Dendritic cell treated with granulocyte-macrophage colony-stimulating factor and Interleukin-4, amounts not matched to agents 40 ng/mL and 50 ng/mL, for 4 days (primary cell): ENCODE measurements at regions of chr19 and their contacts with region 1.

Region 1: DNA sequence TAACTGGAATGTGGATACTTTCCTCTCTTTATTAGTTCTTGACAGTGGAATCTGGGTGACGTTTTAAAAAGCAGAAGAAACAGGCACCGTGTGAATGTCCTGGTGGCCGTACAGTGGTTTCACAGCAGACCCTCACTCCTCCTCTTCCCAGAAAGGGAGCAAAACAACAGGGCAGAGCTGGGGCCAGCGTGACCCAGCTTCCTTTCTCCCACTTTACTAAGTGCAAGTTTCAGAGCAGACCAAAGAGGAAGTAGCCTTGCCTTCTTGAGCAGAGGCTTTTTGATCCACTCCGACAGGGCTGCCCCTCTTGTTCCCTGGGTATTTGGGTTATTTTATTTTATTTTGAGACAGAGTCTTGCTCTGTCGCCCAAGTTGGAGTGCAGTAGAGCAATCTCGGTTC is 19.6 kb upstream of the C19orf33 start:
- H3K4me3 Mint-ChIP-seq: peak overlapping the region; percentile 51
- H3K27ac Mint-ChIP-seq: peak overlapping the region; percentile 89
- H3K4me1 Mint-ChIP-seq: peaks cover 89% of the 10 kb centered on the region
- H3K27me3 Mint-ChIP-seq: no peaks in the 10 kb centered on the region

Region 2: GRCh38 chr19:38216785-38217641 is 67.4 kb before region 1 on chr19:
- intact Hi-C with region 1: no loop called
- H3K4me3 Mint-ChIP-seq: no peak overlapping the region
- H3K27ac Mint-ChIP-seq: no peak overlapping the region
- H3K4me1 Mint-ChIP-seq: peaks cover 8% of the 10 kb centered on the region
- H3K27me3 Mint-ChIP-seq: peaks cover 61% of the 10 kb centered on the region

Region 3: DNA sequence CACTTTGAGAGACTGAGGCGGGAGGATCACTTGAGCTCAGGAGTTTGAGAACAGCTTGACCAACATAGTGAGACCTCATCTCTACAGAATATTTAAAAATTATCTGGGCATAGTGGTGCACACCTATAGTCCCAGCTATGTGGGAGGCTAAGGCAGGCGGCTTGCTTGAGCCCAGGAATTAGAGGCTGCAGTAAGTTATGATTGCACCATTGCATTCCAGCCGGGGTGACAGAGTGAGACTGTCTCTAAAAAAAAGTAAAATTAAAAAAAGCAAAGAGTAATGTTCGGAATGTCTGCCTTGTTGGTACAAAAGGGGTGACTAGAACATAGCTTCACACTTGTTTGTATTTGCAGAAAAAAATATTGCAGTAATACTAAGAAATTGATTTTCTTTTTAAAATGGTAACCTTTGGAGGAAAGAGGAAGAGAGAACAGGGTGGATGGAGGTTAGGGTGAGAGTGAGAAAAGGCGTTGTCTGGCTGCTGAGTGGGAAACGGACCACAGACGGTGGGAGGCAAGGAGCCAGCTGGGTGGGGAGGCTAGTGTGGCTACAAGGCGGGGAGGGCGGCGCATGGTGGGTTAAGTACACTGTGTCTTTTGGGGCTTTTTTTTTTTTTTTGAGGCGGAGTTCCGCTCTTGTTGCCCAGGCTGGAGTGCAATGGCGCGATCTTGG is 38.5 kb before region 1 on chr19:
- intact Hi-C with region 1: loop called (anchors 5 kb)
- H3K4me3 Mint-ChIP-seq: peak overlapping the region; percentile 30
- H3K27ac Mint-ChIP-seq: peak overlapping the region; percentile 87
- H3K4me1 Mint-ChIP-seq: peaks cover 48% of the 10 kb centered on the region
- H3K27me3 Mint-ChIP-seq: peaks cover 7% of the 10 kb centered on the region

Region 4: DNA sequence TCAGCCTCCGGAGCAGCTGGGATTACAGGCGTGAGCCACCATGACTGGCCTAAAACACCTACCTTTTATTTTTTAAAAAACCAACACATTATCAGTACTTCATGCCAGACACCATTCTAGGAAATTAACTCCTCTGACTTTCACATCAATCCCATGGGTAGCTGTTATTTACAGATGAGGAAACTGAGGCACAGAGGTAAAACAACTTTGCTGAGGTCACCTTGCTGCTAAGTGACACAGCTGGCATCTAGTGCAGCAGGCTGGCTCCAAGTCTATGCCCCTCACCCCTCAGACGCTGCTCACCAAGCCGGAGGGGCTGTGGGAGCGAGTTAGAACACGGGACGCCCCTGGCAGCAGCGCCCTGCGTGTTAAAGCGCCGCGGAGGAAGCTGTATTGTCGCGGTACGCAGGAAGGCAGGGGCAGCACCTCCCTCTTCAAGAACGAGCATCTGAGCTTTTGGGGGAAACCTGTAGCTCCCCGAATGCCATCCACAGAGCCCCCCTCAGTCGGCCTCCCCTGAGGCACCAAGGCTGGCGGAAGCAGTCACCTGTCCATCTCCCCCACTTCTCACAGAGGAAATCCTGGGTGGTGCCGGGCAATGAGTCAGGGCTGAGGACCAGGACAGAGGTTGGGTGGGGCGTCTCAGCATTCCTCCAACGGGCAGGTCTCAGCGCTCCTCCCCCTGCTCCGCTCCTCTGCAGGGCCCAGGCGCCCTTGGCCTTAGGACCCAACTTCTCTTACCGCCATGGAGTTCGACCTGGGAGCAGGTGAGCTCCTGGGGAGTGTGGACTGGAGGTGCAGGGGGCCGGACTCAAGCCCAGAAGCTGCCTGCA is 19.3 kb after region 1 on chr19 and contains the start of gene C19orf33:
- intact Hi-C with region 1: no loop called
- H3K4me3 Mint-ChIP-seq: no peak within 1 kb of the TSS
- H3K27ac Mint-ChIP-seq: no peak within 1 kb of the TSS
- H3K4me1 Mint-ChIP-seq: peaks cover 51% of the 10 kb centered on the region
- H3K27me3 Mint-ChIP-seq: no peaks in the 10 kb centered on the region

Region 5: DNA sequence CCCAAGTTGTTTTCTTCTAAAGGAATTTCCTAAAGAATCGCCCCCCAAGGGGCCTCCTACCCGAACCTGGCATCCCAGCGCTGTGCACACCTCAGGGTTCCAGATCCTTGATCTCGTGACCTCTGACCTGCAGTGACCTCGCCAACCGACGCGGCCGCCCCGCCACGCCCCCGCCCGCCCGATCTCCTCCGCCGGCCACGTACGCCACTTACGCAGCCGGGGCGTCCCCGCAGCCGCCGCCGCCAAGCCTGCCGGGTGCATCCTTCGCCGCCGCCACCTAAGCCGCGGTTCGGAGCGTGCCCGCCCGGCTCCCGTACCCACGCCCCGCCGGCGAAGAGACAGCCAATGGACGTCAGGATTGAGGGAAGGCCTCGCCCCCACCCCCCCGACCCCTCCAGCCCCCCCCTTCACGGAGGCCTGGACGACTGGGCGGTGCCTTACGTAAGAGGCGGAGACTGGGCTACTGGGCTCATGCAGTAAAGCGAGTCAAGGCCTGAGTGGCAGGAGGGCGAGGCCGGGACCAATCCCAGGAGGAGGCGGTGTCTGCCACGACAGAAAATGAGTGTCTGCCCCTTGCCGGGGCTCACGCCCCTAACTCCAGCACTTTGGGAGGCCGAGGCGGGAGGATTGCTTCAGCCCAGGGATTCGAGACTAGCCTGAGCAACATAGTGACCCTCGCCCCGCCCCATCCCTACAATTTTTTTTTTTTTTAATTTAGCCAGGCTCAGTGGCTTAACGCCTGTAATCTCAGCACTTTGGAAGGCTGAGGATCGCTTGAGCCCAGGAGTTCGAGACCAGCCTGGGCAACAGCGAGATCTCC is 31.4 kb after region 1 on chr19 and contains the start of gene YIF1B:
- intact Hi-C with region 1: loop called (anchors 2 kb)
- H3K4me3 Mint-ChIP-seq: peak within 1 kb of the TSS; percentile 85
- H3K27ac Mint-ChIP-seq: peak within 1 kb of the TSS; percentile 90
- H3K4me1 Mint-ChIP-seq: peaks cover 76% of the 10 kb centered on the region
- H3K27me3 Mint-ChIP-seq: no peaks in the 10 kb centered on the region